Transverse colon (tissue), 4 donors: ENCODE measurements at regions of chr1 and their contacts with region 1.

Region 1: DNA sequence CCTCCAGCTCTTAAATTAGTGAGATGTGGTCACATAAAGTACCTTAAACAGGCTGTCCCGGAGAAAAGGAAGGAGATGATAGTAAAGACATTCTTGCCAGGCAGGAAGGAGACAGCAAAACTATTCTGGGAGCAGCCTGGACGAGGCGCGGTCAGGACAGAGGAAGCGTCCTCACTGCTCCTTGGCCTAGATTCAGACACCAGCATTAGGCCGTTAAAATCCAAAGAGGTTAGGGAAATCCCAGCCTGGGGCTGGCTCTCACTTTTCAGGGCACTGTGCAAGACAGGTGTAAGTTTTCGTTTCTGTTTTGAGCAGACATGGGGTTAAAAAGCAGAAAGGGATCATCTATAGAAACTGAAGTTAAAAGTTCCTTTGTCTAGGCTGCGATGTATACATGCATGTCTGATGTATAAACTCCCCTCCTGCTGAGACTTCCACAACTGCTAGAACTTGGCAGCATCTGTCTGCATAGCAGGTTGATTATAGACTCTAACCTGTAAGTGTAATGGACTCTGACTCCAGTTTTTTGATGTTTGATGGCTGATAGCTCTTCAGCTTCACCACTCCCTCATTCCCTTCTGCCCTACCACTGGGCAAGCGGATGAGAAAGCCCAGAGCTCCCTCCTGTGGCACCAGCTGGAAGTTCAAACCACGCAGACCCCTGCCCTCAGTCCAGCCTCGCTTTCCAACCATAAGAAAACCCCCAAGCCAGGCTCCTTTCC is 21.5 kb downstream of the STPG1 start:
- DNase-seq: peak; percentile 80
- H3K4me3 ChIP-seq: peak overlapping the region in 1 of 4 donors; percentile 23
- H3K27ac ChIP-seq: peak overlapping the region; percentile 82 to 87 (median 84)
- H3K4me1 ChIP-seq: peaks cover 7 to 41% (median 10%) of the 10 kb centered on the region in 4 donors
- H3K27me3 ChIP-seq: no peaks in the 10 kb centered on the region
- CTCF ChIP-seq: peak; percentile 72 to 91 (median 77)
- EP300 ChIP-seq: no peak
- POLR2A ChIP-seq: no peak

Region 2: DNA sequence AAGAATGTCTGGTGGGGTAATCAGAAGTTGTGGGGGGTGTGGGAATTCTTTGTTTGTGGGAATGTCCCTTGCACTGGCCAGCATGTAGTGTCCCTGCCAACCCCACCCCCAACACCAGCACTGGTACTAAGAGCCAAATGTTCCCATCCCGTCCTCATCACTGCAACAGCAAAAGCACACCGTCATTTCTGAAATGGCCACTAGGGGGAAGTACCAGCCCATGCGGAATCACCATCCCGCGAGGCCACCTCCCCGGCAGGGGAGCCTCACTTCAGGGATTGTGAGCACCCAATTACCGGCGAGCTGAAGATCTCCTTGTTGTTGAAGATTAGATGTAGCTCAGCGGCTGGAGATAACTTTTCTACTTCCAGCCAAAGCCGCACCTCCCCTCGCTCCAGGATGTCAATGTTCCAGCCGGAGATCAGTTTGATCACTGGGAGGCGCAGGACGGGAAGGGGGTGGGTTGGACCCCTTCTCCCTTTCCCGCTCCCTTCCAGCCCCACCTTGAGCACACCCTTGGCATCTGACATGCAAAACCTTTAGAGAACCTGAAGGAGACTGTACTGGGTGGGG is 321.1 kb before region 1 on chr1:
- in situ Hi-C with region 1: loop called in 2 of 4 experiments (anchors 10 to 25 kb)
- intact Hi-C with region 1: no loop called
- DNase-seq: peak; percentile 81
- H3K4me3 ChIP-seq: no peak overlapping the region
- H3K27ac ChIP-seq: no peak overlapping the region
- H3K4me1 ChIP-seq: peaks cover 0 to 5% (median 0%) of the 10 kb centered on the region in 4 donors
- H3K27me3 ChIP-seq: no peaks in the 10 kb centered on the region
- CTCF ChIP-seq: peak; percentile 84 to 93 (median 88)
- EP300 ChIP-seq: no peak
- POLR2A ChIP-seq: no peak

Region 3: DNA sequence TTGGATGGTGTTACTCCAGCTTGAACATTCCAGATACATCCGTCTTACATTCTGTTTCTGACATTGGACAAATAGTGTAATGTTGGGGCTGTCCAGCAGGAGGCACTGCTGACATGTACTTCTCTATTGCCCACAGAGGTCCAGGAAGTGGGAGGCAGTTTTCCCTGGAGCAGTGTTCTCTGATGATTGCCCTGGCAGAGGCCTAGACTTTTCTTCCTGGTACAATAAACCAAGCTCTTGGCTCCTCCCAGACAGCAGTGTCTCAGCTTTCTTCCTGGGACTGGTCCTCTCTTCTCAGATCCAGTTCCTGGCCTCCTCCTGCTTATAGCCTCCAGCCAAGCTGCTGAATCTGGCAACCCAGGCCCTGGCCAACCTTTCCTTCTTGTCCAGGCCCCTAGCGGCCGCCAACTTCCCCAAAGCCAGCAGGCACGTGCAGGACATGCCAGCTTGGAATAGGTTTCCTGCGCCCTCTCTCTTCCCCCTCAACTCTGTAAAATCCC is 190.1 kb before region 1 on chr1:
- in situ Hi-C with region 1: loop called (anchors 5 kb)
- intact Hi-C with region 1: loop called (anchors 2 kb)
- DNase-seq: peak; percentile 94
- H3K4me3 ChIP-seq: no peak overlapping the region
- H3K27ac ChIP-seq: peak overlapping the region; percentile 58 to 75 (median 64)
- H3K4me1 ChIP-seq: peaks cover 3 to 27% (median 12%) of the 10 kb centered on the region in 4 donors
- H3K27me3 ChIP-seq: no peaks in the 10 kb centered on the region
- CTCF ChIP-seq: peak; percentile 67 to 95 (median 80)
- EP300 ChIP-seq: no peak
- POLR2A ChIP-seq: no peak

Region 4: DNA sequence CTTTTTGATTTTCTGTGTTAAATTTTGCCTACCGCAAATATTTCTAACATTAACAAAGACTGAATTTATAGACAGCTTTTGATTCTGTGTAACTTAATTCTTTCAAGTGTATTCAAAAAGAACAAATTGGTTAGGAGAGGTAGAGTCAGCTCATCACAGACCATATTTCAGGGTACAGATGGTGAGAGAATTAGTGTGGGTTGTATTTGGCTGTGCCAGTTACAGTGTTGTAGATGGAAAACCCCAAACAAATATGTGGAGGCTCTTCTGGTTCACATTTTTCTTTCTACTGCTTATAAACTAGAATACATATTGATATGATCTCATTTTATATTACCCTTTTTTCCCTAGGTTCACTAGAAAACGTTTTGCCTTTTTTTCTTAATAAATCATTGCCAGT is 121.7 kb after region 1 on chr1:
- in situ Hi-C with region 1: no loop called
- intact Hi-C with region 1: no loop called
- DNase-seq: no peak
- H3K4me3 ChIP-seq: no peak overlapping the region
- H3K27ac ChIP-seq: no peak overlapping the region
- H3K4me1 ChIP-seq: no peaks in the 10 kb centered on the region
- H3K27me3 ChIP-seq: no peaks in the 10 kb centered on the region
- CTCF ChIP-seq: no peak
- EP300 ChIP-seq: no peak
- POLR2A ChIP-seq: no peak

Region 5: DNA sequence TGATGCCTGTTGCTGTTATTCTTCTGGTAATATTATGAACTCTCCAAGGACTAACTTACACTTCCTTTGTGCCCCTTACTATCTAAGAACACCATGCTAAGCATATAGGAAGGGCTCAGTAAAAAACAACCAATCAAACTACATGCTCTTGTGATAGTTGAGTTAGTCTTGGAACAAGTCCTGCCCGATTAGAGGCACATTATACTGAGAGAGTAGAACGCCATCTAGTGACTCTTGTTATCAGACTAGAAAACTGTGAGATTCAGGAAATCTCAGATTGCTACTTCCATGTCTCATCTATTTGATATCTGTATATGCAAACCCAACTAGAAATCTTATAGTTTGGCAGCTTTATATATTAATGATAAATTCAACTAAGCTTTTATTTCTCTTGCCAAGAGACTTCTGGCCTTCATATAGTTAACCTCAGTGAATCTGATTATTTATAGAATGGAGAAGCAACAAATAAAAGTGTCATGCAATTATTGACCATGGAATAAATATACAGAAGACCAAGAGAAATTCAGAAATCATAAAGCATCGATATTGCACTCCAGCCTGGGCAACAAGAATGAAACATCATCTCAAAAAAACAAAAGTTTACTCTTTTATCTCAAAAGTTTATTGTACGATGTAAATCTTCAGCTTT is 243.3 kb after region 1 on chr1:
- in situ Hi-C with region 1: loop called in 1 of 4 experiments (anchors 10 kb)
- intact Hi-C with region 1: no loop called
- DNase-seq: no peak
- H3K4me3 ChIP-seq: no peak overlapping the region
- H3K27ac ChIP-seq: no peak overlapping the region
- H3K4me1 ChIP-seq: peaks cover 0 to 4% (median 0%) of the 10 kb centered on the region in 4 donors
- H3K27me3 ChIP-seq: no peaks in the 10 kb centered on the region
- CTCF ChIP-seq: peak; percentile 42 to 53 (median 48)
- EP300 ChIP-seq: no peak
- POLR2A ChIP-seq: no peak